PC-3 (cell line): ENCODE measurements at regions of chr6 and their contacts with region 1.

Region 1: DNA sequence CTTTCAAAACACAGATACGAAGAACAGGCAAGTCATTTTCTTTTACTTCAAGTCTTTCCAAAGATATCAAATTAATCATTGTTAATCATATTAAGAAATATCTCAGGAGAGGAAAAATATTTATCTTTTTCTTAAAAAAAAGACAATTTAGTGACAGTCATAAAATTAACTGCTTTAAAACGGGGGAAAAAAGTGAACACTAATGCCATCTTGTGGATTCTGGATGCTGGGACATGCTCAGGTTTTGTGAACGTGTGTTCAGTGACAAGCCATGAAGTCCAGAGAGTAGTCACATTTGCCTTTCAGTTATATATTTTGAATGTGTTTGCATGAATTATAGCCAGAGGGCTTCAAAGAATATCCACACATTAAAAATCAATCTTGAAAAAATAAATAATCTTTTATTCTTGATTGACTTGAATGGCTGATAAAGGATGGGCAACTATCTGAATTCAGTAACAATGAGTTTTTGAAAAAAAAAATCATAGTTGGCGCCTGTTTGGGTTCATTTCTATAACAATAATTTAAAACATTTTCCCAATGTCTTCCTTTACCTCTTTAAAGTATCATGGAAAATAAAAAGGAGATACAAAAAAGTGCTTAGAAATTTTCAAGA is 74.7 kb upstream of the NOX3 start:
- DNase-seq: peak; percentile 60
- ATAC-seq: peak; percentile 64; the same call in 1 of the 2 replicates
- H3K4me3 ChIP-seq: no peak overlapping the region
- H3K27ac ChIP-seq: peak overlapping the region; percentile 75
- H3K4me1 ChIP-seq: peaks cover 17% of the 10 kb centered on the region
- H3K27me3 ChIP-seq: no peaks in the 10 kb centered on the region
- CTCF ChIP-seq: peak; percentile 80

Region 2: DNA sequence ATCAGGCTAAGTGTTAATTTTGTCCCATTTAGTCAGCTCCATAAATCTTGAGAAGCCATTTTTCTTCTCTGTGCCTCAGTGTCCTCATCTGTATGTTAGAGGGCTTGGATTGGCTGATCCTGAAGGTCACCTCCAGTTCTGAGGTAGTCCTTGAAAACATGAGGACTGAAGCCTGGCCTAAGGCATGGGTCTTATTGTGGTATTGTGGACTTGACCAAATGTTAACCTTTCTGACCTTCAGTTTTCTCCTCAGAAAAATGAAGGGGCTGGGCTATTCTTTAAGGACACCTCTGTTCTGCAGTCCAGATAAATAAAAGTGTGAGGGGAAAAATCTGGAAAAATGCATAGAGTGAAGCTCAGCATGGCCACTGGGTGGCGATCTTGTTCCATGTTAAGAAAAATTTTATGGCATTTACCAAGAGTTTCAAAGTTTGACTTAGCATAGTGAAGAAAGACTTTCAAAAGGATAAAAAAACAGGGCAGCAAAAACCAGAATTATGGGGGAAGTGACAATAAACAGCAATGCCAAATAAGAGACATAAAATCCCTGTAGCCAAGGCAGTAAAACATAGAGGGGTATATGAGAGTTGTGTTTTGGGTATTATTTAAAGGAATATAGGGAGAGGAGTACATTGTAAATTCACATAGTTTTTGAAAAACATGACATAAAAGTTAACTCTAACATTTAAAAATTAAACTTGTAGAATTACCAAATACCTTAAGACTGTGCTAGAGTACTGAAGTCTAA is 202.8 kb before region 1 on chr6:
- CTCF ChIA-PET with region 1: interaction called, 3 read pairs
- POLR2A ChIA-PET with region 1: no interaction called
- intact Hi-C with region 1: loop called (anchors 1 kb)
- DNase-seq: peak; percentile 65
- ATAC-seq: peak; percentile 63
- H3K4me3 ChIP-seq: no peak overlapping the region
- H3K27ac ChIP-seq: peak overlapping the region; percentile 33
- H3K4me1 ChIP-seq: peaks cover 28% of the 10 kb centered on the region
- H3K27me3 ChIP-seq: no peaks in the 10 kb centered on the region
- CTCF ChIP-seq: peak; percentile 82

Region 3: DNA sequence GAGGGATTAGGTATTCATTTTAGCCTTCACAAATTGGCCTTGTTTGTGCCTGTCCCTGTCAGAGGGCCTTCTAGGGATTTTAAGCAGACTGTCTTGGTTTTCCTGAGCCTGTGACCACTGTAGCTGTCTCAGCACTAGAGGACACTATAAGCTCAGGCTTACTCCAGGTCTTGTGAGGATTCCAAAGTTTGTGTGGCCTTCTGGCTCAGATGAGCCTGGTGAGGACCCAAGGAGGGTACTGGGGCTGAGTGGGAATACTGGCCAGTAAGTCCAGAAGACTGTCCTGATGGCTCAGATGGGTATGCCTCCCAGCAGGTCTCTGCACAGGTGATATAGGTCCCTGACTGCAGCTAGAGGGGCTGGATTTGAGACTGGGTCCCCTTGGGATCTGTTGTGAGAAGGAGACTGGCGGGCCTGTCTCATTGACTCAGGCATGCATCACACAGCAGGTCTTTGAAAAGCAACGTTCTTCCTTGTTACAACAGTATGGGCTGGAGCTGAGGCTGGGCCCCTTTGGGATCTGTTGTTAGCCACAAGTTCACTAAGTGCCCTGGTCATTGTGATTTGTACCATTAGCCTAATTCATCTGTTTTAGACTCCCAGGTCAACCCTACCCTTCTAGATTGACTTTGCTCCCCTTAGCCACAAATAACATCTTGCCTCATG is 189.7 kb before region 1 on chr6:
- CTCF ChIA-PET with region 1: no interaction called
- POLR2A ChIA-PET with region 1: no interaction called
- intact Hi-C with region 1: loop called (anchors 5 kb)
- DNase-seq: peak; percentile 54
- ATAC-seq: peak; percentile 49
- H3K4me3 ChIP-seq: no peak overlapping the region
- H3K27ac ChIP-seq: peak overlapping the region; percentile 95
- H3K4me1 ChIP-seq: peaks cover 14% of the 10 kb centered on the region
- H3K27me3 ChIP-seq: no peaks in the 10 kb centered on the region
- CTCF ChIP-seq: peak; percentile 46; the same call in 1 of the 2 replicates

Region 4: GRCh38 chr6:155765275-155766194 is 235.2 kb after region 1 on chr6:
- CTCF ChIA-PET with region 1: no interaction called
- POLR2A ChIA-PET with region 1: no interaction called
- intact Hi-C with region 1: loop called (anchors 2 kb)
- DNase-seq: peak; percentile 35
- ATAC-seq: no peak; the same call in 1 of the 2 replicates
- H3K4me3 ChIP-seq: no peak overlapping the region
- H3K27ac ChIP-seq: 0 out of 2 replicates have a peak overlapping the region, but pooled peaks have one; percentile 8
- H3K4me1 ChIP-seq: peaks cover 11% of the 10 kb centered on the region; the same call in 1 of the 2 replicates
- H3K27me3 ChIP-seq: no peaks in the 10 kb centered on the region
- CTCF ChIP-seq: peak; percentile 24; the same call in 1 of the 2 replicates